Mammary epithelial cell (primary cell): ENCODE measurements at regions of chr6 and their contacts with region 1.

Region 1: GRCh38 chr6:52664186-52664990 is 6.5 kb upstream of the TMEM14A start:
- DNase-seq: peak; percentile 88
- H3K4me3 ChIP-seq: peak overlapping the region; percentile 66 to 71 (median 70)
- H3K27ac ChIP-seq: peak overlapping the region; percentile 24
- H3K4me1 ChIP-seq: peaks cover 16% of the 10 kb centered on the region
- H3K27me3 ChIP-seq: no peaks in the 10 kb centered on the region
- CTCF ChIP-seq: no peak

Region 2: GRCh38 chr6:52162940-52163908 is 501.2 kb before region 1 on chr6:
- CTCF ChIA-PET with region 1: no interaction called
- dilution Hi-C with region 1: no loop called
- in situ Hi-C with region 1: loop called in 1 of 2 experiments (anchors 25 kb)
- intact Hi-C with region 1: loop called (anchors 5 kb)
- DNase-seq: peak; percentile 34
- H3K4me3 ChIP-seq: no peak overlapping the region
- H3K27ac ChIP-seq: no peak overlapping the region
- H3K4me1 ChIP-seq: peaks cover under 1% of the 10 kb centered on the region
- H3K27me3 ChIP-seq: no peaks in the 10 kb centered on the region
- CTCF ChIP-seq: peak; percentile 93 to 97

Region 3: DNA sequence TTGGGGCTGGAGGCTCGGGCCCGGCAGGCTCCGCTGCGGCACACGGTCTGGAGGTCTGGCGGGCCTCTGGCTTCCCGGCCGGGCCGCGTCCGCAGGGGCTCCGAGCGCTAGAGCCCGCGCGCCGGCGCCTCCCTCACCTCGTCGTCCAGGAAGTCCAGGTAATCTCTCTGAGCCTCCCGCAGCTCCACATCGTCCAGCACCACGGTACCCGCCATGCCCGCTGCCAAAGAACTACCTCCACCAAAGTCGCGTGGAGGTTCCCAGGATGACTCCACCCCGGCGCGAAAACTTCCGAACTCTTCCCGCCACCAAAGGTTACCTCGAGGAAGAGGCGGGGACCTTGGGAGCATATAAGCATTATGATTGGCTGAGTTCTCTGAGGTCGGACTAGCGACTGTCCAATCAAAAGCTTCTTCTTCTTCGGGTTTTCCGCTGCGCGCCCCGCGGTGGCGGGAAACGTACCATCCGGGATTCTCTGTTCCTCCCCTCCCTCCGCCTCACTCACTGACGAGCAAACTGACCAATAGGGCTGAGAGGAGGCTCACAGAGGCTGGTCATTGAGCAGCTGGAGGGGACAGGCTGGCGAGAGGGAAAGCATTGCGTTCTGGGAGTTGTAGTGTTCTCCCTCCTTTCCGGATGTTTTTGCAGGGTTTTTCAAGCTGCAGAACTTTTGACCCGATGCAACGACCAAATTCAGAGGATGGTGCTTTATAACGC is 379.8 kb before region 1 on chr6 and contains the start of gene MCM3:
- CTCF ChIA-PET with region 1: no interaction called
- dilution Hi-C with region 1: loop called (anchors 10 kb)
- in situ Hi-C with region 1: loop called in 1 of 2 experiments (anchors 10 kb)
- intact Hi-C with region 1: loop called (anchors 1 kb)
- DNase-seq: peak; percentile 99
- H3K4me3 ChIP-seq: peak within 1 kb of the TSS; percentile 65 to 90 (median 86)
- H3K27ac ChIP-seq: peak within 1 kb of the TSS; percentile 69
- H3K4me1 ChIP-seq: peaks cover 12% of the 10 kb centered on the region
- H3K27me3 ChIP-seq: no peaks in the 10 kb centered on the region
- CTCF ChIP-seq: peak in 1 of 2 donors; percentile 9
- total RNA-seq, gene MCM3: 23.5 to 69.5 TPM

Region 4: DNA sequence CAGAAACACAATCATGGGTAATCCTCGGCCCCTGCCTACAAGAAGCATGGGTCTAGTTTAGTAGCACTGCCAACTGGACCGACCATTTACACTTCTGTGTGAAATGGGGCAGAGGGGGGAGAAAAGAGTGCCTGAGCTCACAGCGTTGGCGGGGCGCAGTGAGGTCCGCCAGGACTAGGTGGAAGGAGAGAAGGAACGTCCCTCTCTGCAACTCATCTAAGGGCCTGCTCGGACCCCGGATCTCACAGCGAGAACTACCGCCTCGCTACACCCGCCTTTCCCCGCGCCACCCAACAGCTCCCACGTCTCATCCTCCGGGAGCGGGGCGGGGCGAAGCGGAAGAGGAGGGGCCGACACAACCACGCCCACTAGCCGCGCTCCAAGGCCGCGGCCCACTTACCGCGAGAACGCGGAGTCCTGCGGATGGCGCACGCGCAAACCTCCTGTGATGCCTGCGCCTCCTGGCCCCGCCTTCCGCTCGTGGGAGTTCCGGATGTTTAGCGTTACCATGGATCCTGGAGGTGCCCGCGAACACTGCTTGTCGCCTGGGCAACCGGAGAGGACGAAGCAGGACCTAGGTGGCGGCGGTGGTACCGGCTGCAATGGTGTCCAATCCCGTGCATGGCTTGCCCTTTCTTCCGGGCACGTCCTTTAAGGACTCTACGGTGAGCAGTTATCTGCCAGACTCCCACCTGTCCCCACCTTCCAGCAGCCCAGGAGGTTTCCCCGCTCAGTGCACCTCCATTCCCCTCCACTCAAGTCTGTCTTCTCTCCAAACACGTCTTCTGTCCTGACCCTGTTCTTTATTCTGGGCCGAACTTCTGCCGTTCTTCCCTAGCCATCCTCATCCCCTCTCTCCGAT is 244.3 kb before region 1 on chr6 and contains the start of gene EFHC1:
- CTCF ChIA-PET with region 1: no interaction called
- dilution Hi-C with region 1: loop called (anchors 25 kb)
- in situ Hi-C with region 1: loop called in 1 of 2 experiments (anchors 5 kb)
- intact Hi-C with region 1: loop called (anchors 1 kb)
- DNase-seq: peak; percentile 97
- H3K4me3 ChIP-seq: peak within 1 kb of the TSS; percentile 65 to 76 (median 74)
- H3K27ac ChIP-seq: peak within 1 kb of the TSS; percentile 99
- H3K4me1 ChIP-seq: peaks cover 31% of the 10 kb centered on the region
- H3K27me3 ChIP-seq: no peaks in the 10 kb centered on the region
- CTCF ChIP-seq: no peak
- total RNA-seq, gene EFHC1: 16.3 to 17.6 TPM

Region 5: DNA sequence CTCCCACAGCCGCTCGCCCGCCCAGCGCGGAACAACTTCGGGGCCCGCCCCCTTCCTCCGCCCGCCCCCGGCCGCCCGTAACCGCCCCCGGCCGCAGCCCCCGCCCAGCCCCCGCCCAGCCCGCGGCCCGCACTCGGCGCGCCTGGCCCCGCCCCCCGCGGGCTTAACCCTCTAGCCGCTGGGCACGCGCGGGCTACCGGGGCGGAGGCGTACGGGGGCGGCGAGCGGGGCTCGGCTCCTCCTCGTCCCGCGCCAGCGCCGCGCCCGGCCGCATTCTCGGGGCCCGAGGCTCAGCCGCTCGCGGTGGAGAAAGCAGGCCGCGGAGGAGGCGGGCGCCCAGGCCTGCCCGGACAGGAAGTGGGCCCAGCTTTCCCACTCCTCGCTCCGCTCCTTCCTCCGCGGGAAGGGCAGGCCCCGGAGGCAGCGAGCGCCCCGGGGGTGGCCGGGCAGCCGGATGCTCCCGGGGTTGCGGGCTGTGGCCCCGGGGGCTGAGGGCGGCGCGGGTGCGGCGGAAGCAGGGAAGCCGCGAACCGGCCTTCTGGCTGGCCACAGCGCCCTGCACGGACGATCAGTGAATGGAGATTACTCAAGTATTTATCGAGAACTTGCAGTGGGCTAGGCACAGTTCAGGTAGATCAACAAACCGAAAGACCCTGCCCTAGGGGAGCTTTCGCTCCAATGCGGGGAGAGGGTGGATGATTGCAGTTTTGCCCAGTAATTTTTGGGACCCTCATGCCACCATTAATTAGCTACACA is 87.2 kb before region 1 on chr6 and contains the start of gene TRAM2:
- CTCF ChIA-PET with region 1: no interaction called
- dilution Hi-C with region 1: no loop called
- in situ Hi-C with region 1: no loop called
- intact Hi-C with region 1: loop called (anchors 1 kb)
- DNase-seq: peak; percentile 71
- H3K4me3 ChIP-seq: peak within 1 kb of the TSS; percentile 67 to 85 (median 83)
- H3K27ac ChIP-seq: peak within 1 kb of the TSS; percentile 70
- H3K4me1 ChIP-seq: peaks cover 22% of the 10 kb centered on the region
- H3K27me3 ChIP-seq: no peaks in the 10 kb centered on the region
- CTCF ChIP-seq: no peak
- total RNA-seq, gene TRAM2: 12.5 to 16.9 TPM

Region 6: GRCh38 chr6:52696418-52696817 is 32.0 kb after region 1 on chr6:
- CTCF ChIA-PET with region 1: no interaction called
- dilution Hi-C with region 1: no loop called
- in situ Hi-C with region 1: no loop called
- intact Hi-C with region 1: loop called (anchors 1 kb)
- DNase-seq: no peak
- H3K4me3 ChIP-seq: no peak overlapping the region
- H3K27ac ChIP-seq: no peak overlapping the region
- H3K4me1 ChIP-seq: peaks cover 10% of the 10 kb centered on the region
- H3K27me3 ChIP-seq: no peaks in the 10 kb centered on the region
- CTCF ChIP-seq: no peak

Region 7: GRCh38 chr6:53484476-53485280 is 820.3 kb after region 1 on chr6:
- CTCF ChIA-PET with region 1: no interaction called
- dilution Hi-C with region 1: no loop called
- in situ Hi-C with region 1: no loop called
- intact Hi-C with region 1: loop called (anchors 10 kb)
- DNase-seq: peak; percentile 43
- H3K4me3 ChIP-seq: no peak overlapping the region
- H3K27ac ChIP-seq: no peak overlapping the region
- H3K4me1 ChIP-seq: no peaks in the 10 kb centered on the region
- H3K27me3 ChIP-seq: no peaks in the 10 kb centered on the region
- CTCF ChIP-seq: peak; percentile 93 to 96